ENCODE measurements at regions of chr18 and their contacts with region 1.

Region 1: DNA sequence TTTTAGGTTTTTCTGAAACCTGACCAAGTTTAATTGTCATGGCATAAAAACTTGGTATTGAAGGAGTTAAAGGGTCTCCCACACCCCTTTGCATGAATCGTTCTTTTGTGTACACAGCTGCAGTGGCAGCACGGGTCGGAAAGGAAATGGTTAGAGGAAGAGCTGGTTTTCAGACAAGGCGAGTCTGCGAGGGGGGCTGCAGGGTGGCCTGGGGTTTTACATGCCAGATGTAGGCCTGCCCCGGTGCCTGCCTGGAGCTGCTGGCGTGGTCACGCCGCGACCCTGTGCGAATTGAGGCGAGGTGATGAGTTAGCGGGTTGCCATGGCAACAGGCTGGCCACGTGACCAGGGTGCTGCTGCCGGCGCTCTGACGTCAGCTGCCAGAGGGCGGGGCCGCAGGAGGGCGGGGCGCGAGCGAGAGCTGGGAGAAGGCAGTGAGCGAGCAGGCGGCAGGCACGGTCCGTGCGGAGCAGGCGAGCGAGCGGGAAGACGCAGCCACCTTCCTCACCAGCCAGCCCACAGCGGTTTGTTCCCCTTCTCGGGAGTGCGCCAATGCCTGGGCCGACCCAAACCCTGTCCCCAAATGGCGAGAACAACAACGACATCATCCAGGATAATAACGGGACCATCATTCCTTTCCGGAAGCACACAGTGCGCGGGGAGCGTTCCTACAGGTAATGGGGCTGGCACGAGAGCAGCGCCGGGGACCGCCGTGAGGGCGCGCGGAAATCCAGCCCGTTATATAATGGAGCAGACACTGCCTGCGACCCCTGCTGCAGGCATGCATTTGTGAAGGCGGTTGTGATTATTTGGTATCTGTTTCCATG is at the start of gene MAPRE2:
- DNase-seq: peak; percentile 98
- H3K4me3 Mint-ChIP-seq: peak within 1 kb of the TSS; percentile 95
- H3K27ac Mint-ChIP-seq: peak within 1 kb of the TSS; percentile 99
- H3K4me1 Mint-ChIP-seq: peaks cover 51% of the 10 kb centered on the region
- H3K27me3 Mint-ChIP-seq: no peaks in the 10 kb centered on the region
- total RNA-seq, gene MAPRE2: 42.7 and 44.6 TPM in 2 replicates

Region 2: GRCh38 chr18:34746614-34747013 is 294.6 kb before region 1 on chr18:
- intact Hi-C with region 1: no loop called
- DNase-seq: no peak
- H3K4me3 Mint-ChIP-seq: no peak overlapping the region
- H3K27ac Mint-ChIP-seq: no peak overlapping the region
- H3K4me1 Mint-ChIP-seq: no peaks in the 10 kb centered on the region
- H3K27me3 Mint-ChIP-seq: peaks cover 3% of the 10 kb centered on the region

Region 3: GRCh38 chr18:35029770-35030169 is 11.4 kb before region 1 on chr18:
- intact Hi-C with region 1: loop called (anchors 1 kb)
- DNase-seq: no peak
- H3K4me3 Mint-ChIP-seq: peak overlapping the region; percentile 80
- H3K27ac Mint-ChIP-seq: peak overlapping the region; percentile 98
- H3K4me1 Mint-ChIP-seq: peaks cover 54% of the 10 kb centered on the region
- H3K27me3 Mint-ChIP-seq: no peaks in the 10 kb centered on the region

Region 4: GRCh38 chr18:35158728-35159450 is 117.7 kb after region 1 on chr18:
- intact Hi-C with region 1: loop called (anchors 1 kb)
- DNase-seq: peak; percentile 17
- H3K4me3 Mint-ChIP-seq: no peak overlapping the region
- H3K27ac Mint-ChIP-seq: peak overlapping the region; percentile 89
- H3K4me1 Mint-ChIP-seq: peaks cover 20% of the 10 kb centered on the region
- H3K27me3 Mint-ChIP-seq: no peaks in the 10 kb centered on the region

Region 5: GRCh38 chr18:35290073-35290735 is 249.0 kb after region 1 on chr18 and contains the start of gene ZSCAN30:
- intact Hi-C with region 1: loop called (anchors 5 kb)
- DNase-seq: peak; percentile 93
- H3K4me3 Mint-ChIP-seq: peak within 1 kb of the TSS; percentile 98
- H3K27ac Mint-ChIP-seq: peak within 1 kb of the TSS; percentile 94
- H3K4me1 Mint-ChIP-seq: peaks cover 29% of the 10 kb centered on the region
- H3K27me3 Mint-ChIP-seq: no peaks in the 10 kb centered on the region
- total RNA-seq, gene ZSCAN30: 15.5 and 19.9 TPM in 2 replicates

Region 6: GRCh38 chr18:35972197-35973052 is 931.2 kb after region 1 on chr18 and contains the start of gene RMP24:
- intact Hi-C with region 1: loop called (anchors 5 kb)
- DNase-seq: peak; percentile 90
- H3K4me3 Mint-ChIP-seq: peak within 1 kb of the TSS; percentile 96
- H3K27ac Mint-ChIP-seq: peak within 1 kb of the TSS; percentile 94
- H3K4me1 Mint-ChIP-seq: peaks cover 39% of the 10 kb centered on the region
- H3K27me3 Mint-ChIP-seq: no peaks in the 10 kb centered on the region

Region 7: DNA sequence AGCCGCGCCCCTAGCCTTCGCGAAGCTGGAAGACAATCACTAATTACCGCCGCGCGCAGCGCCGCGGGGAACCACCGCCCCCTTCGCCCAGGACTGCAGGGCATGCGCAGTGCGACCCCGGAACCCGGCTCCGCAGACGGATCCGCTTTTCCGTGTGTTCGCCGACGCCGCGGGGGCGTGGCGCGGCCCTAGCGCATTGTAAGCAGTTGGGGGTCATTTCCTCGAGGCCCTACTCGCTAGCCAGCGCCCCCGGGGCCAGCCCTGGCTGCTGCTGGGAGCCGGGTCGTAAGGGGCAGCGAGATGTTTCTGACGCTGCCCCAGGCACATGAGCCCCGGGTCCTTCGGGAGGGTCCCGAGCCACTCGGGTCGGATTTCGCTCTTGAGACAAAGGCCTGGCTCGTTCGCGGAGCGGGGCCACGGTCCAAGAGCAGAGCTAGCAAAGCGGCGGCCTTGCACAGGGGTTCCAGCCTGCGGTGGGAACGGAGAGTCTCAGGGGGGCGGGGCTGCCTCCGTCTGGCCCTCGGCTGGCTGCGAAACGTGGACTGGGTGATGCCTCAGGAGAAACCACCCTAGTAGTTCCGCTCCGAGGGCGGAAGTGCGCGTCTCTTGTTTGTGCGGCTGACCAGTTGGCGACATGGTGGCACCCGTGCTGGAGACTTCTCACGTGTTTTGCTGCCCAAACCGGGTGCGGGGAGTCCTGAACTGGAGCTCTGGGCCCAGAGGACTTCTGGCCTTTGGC is 1088.3 kb after region 1 on chr18 and contains the starts of genes ELP2 and SLC39A6:
- intact Hi-C with region 1: loop called (anchors 5 kb)
- DNase-seq: peak; percentile 92
- H3K4me3 Mint-ChIP-seq: peak within 1 kb of the TSS; percentile 95
- H3K27ac Mint-ChIP-seq: peak within 1 kb of the TSS; percentile 93
- H3K4me1 Mint-ChIP-seq: peaks cover 47% of the 10 kb centered on the region
- H3K27me3 Mint-ChIP-seq: no peaks in the 10 kb centered on the region
- total RNA-seq, gene ELP2: 93.3 and 94.2 TPM in 2 replicates
- total RNA-seq, gene SLC39A6: 41.7 and 42.7 TPM in 2 replicates